CD4-positive, alpha-beta memory T cell (primary cell): ENCODE measurements at regions of chr3 and their contacts with region 1.

Region 1: DNA sequence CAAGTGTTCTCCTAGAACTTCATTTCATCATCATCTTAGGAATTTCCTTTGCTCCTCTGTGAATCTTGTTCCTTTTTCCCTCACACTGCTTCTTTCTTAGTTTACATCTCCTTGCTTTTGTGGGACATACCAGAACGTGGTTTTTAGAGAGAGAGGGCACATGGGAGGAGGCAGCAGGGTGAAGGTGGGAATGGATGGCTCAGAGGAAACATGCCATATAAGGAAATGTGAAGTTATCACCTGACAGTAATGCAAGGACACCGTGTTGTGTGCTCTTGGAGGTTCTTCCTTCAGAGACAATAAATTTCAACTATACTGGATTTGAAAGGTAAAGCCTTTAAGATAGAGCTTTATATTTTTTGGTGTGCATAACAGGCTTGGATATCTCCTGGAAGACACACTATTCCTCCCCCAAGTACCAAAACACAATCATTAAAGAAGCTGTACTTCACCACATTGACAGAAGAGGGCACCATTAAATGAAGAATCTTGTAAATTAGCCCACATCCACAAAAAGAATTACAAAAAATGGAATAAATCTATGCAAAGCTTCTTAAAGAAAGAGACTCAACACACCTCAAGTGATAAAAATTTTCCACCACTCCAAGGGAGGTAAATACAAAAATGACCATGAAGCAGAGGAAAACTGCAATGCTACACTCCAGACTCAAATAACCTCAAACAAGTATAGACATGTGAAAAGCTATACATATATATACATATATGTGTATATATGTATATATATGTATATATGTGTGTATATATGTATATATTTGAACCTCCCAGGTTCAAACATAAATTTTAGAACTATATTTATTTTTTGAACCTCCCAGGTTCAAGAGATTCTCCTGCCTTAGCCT is 26.1 kb downstream of the RPL39L start:
- DNase-seq: peak in 4 of 5 donors; percentile 45 to 54 (median 52)
- H3K4me3 ChIP-seq: no peak overlapping the region
- H3K4me3 Mint-ChIP-seq: no peak overlapping the region
- H3K27ac ChIP-seq: no peak overlapping the region
- H3K27ac Mint-ChIP-seq: no peak overlapping the region
- H3K4me1 ChIP-seq: peaks cover 4% of the 10 kb centered on the region
- H3K4me1 Mint-ChIP-seq: peaks cover 5 to 7% (median 6%) of the 10 kb centered on the region in 4 donors
- H3K27me3 ChIP-seq: no peaks in the 10 kb centered on the region
- H3K27me3 Mint-ChIP-seq: no peaks in the 10 kb centered on the region

Region 2: DNA sequence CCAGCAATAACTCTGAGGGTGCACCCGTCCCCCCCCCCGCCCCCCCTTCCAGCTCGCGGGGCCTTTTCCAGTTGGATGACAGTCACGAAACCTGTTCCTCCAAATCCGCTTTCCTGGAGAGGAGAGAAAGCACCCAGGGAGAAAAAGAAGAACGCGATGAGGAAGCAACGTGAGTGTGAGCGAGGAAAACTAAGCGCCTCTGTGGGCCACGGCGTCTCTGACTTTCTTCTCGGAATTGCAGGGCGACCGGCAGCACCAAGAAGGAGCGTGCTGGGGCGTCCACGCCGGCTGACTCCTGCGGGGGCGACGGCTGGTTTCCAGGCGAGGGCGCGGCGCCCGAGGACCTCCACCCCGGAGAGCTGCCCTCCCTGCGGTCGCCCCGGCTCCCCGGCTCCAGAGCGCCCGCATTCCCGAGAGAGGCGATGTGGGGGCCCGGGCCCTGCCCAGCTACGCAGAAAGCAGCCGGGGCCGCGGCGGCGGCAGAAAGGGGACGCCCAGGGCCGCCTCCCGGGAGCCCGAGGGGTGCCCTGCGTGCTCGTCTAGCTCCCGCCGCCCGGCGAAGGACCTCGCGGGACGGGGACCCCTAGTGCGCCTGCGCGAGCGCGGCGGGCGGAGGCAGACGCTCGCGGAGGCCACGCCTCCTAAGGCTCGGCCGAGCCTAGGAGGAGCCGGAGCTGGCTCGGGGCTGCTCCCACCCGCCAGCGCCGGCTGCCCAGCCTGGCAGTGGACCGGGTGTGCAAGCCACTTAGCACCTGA is 286.0 kb before region 1 on chr3:
- CTCF ChIA-PET with region 1: interaction called, 11 read pairs
- POLR2A ChIA-PET with region 1: no interaction called
- intact Hi-C with region 1: no loop called
- DNase-seq: peak; percentile 81 to 89 (median 87)
- H3K4me3 ChIP-seq: peak overlapping the region in 1 of 2 donors; percentile 65
- H3K4me3 Mint-ChIP-seq: peak overlapping the region; percentile 65 to 93 (median 78)
- H3K27ac ChIP-seq: peak overlapping the region; percentile 47
- H3K27ac Mint-ChIP-seq: peak overlapping the region in 2 of 7 donors; percentile 18 to 28
- H3K4me1 ChIP-seq: peaks cover 25% of the 10 kb centered on the region
- H3K4me1 Mint-ChIP-seq: peaks cover 5 to 16% (median 12%) of the 10 kb centered on the region in 4 donors
- H3K27me3 ChIP-seq: peaks cover 21% of the 10 kb centered on the region
- H3K27me3 Mint-ChIP-seq: peaks cover 30 to 38% of the 10 kb centered on the region in 2 donors

Region 3: GRCh38 chr3:187101184-187102072 is 11.7 kb before region 1 on chr3:
- CTCF ChIA-PET with region 1: interaction called, 57 read pairs
- POLR2A ChIA-PET with region 1: interaction called, 3 read pairs
- intact Hi-C with region 1: no loop called
- DNase-seq: peak; percentile 43 to 57 (median 48)
- H3K4me3 ChIP-seq: peak overlapping the region; percentile 17 to 27
- H3K4me3 Mint-ChIP-seq: peak overlapping the region; percentile 70 to 91 (median 84)
- H3K27ac ChIP-seq: peak overlapping the region; percentile 18
- H3K27ac Mint-ChIP-seq: peak overlapping the region; percentile 4 to 93 (median 88)
- H3K4me1 ChIP-seq: peaks cover 23% of the 10 kb centered on the region
- H3K4me1 Mint-ChIP-seq: peaks cover 26 to 35% (median 28%) of the 10 kb centered on the region in 4 donors
- H3K27me3 ChIP-seq: no peaks in the 10 kb centered on the region
- H3K27me3 Mint-ChIP-seq: no peaks in the 10 kb centered on the region

Region 4: GRCh38 chr3:187130346-187131066 is 17.3 kb after region 1 on chr3:
- CTCF ChIA-PET with region 1: interaction called, 19 read pairs
- POLR2A ChIA-PET with region 1: interaction called, 6 read pairs
- intact Hi-C with region 1: no loop called
- DNase-seq: peak; percentile 74 to 86 (median 83)
- H3K4me3 ChIP-seq: peak overlapping the region in 1 of 2 donors; percentile 37
- H3K4me3 Mint-ChIP-seq: peak overlapping the region; percentile 22 to 82 (median 74)
- H3K27ac ChIP-seq: peak overlapping the region; percentile 74
- H3K27ac Mint-ChIP-seq: peak overlapping the region; percentile 93 to 99 (median 98)
- H3K4me1 ChIP-seq: peaks cover 26% of the 10 kb centered on the region
- H3K4me1 Mint-ChIP-seq: peaks cover 16 to 39% (median 27%) of the 10 kb centered on the region in 4 donors
- H3K27me3 ChIP-seq: no peaks in the 10 kb centered on the region
- H3K27me3 Mint-ChIP-seq: no peaks in the 10 kb centered on the region

Region 5: GRCh38 chr3:187145149-187145895 is 32.2 kb after region 1 on chr3:
- CTCF ChIA-PET with region 1: interaction called, 235 read pairs
- POLR2A ChIA-PET with region 1: interaction called, 28 read pairs
- intact Hi-C with region 1: loop called (anchors 1 kb)
- DNase-seq: no peak
- H3K4me3 ChIP-seq: no peak overlapping the region
- H3K4me3 Mint-ChIP-seq: no peak overlapping the region
- H3K27ac ChIP-seq: no peak overlapping the region
- H3K27ac Mint-ChIP-seq: no peak overlapping the region
- H3K4me1 ChIP-seq: no peaks in the 10 kb centered on the region
- H3K4me1 Mint-ChIP-seq: peaks cover 0 to under 1% (median 0%) of the 10 kb centered on the region in 4 donors
- H3K27me3 ChIP-seq: no peaks in the 10 kb centered on the region
- H3K27me3 Mint-ChIP-seq: peaks cover 0 to 2% of the 10 kb centered on the region in 2 donors

Region 6: DNA sequence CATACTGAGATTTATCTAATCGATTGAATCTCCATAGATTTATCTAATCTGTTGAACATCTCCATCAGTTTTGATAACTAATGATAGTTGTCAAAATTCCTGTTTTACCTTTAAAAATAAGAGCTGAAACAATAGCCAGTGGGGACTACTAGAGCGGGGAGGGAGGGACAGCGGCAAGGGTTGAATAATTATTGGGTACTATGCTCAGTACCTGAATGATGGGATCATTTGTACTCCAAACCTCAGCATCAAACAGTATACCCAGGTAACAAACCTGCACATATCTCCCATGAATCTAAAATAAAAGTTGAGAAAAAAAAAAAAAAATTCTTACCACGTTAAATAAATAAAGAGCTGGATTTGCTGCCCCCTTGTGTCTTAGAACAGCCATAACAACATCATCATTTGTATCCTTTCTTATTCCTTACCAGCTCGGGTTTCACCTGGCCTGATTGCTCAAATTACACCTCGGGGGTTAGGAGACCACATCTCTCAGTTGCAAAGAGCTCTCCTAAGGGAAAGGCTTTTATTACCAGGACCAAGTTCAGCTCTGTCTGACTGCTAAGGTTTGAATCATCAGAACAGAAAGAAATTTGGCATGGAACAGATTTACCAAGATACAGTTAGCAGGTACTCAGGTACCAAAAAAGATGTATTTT is 51.9 kb after region 1 on chr3:
- CTCF ChIA-PET with region 1: interaction called, 178 read pairs
- POLR2A ChIA-PET with region 1: interaction called, 5 read pairs
- intact Hi-C with region 1: loop called (anchors 1 kb)
- DNase-seq: peak; percentile 66 to 73 (median 70)
- H3K4me3 ChIP-seq: no peak overlapping the region
- H3K4me3 Mint-ChIP-seq: no peak overlapping the region
- H3K27ac ChIP-seq: no peak overlapping the region
- H3K27ac Mint-ChIP-seq: no peak overlapping the region
- H3K4me1 ChIP-seq: peaks cover 2% of the 10 kb centered on the region
- H3K4me1 Mint-ChIP-seq: peaks cover 0 to 8% (median 4%) of the 10 kb centered on the region in 4 donors
- H3K27me3 ChIP-seq: no peaks in the 10 kb centered on the region
- H3K27me3 Mint-ChIP-seq: peaks cover 6 to 7% of the 10 kb centered on the region in 2 donors

Region 7: DNA sequence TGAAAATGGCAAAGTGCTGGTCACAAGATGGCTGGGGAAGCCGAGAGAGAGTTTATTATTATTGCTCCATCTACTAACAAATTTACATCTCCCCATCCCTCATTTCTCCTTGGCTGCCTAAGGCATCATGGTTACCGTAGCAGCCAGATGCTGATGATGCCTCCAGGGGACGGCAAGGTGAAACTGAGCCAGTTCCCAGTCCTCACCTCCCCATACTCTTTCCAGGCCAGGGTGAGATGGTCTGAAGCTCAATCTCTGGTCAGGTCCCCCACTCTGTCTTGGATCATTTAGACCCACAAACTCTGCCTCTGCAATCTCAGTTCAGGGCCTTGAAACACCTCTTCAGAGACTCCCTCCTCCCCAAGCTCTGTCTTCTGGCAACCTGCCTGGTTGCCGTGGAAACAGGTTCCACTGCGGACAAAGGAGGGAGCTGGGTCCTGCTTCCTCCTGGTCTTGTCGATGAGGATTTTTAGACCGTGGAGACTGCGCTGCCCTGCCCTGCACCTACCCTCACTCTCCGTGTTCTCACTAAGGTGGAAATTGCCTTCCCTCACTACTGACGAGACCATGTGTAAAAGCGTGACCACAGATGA is 84.0 kb after region 1 on chr3 and contains the start of gene RTP1:
- CTCF ChIA-PET with region 1: no interaction called
- POLR2A ChIA-PET with region 1: no interaction called
- intact Hi-C with region 1: no loop called
- DNase-seq: no peak
- H3K4me3 ChIP-seq: no peak within 1 kb of the TSS
- H3K4me3 Mint-ChIP-seq: no peak within 1 kb of the TSS
- H3K27ac ChIP-seq: no peak within 1 kb of the TSS
- H3K27ac Mint-ChIP-seq: no peak within 1 kb of the TSS
- H3K4me1 ChIP-seq: no peaks in the 10 kb centered on the region
- H3K4me1 Mint-ChIP-seq: no peaks in the 10 kb centered on the region
- H3K27me3 ChIP-seq: no peaks in the 10 kb centered on the region
- H3K27me3 Mint-ChIP-seq: peaks cover 2 to 21% of the 10 kb centered on the region in 2 donors
- total RNA-seq, gene RTP1: not detected